Heart left ventricle (tissue), 16 donors: ENCODE measurements at regions of chr17 and their contacts with region 1.

Region 1: GRCh38 chr17:29124117-29124924 is 55.9 kb downstream of the MYO18A start:
- DNase-seq: peak in 1 of 5 donors; percentile 54
- ATAC-seq: peak; percentile 60 to 80 (median 74)
- H3K4me3 ChIP-seq: no peak overlapping the region
- H3K27ac ChIP-seq: peak overlapping the region in 7 of 12 donors; percentile 7 to 63 (median 38)
- H3K4me1 ChIP-seq: peaks cover 5 to 51% (median 36%) of the 10 kb centered on the region in 12 donors
- H3K27me3 ChIP-seq: no peaks in the 10 kb centered on the region
- CTCF ChIP-seq: peak; percentile 48 to 79 (median 68)
- POLR2A ChIP-seq: no peak

Region 2: GRCh38 chr17:28008542-28008941 is 1115.8 kb before region 1 on chr17:
- intact Hi-C with region 1: no loop called
- DNase-seq: peak in 4 of 5 donors; percentile 25 to 48 (median 38)
- ATAC-seq: peak in 3 of 4 donors; percentile 42 to 51 (median 50)
- H3K4me3 ChIP-seq: no peak overlapping the region
- H3K27ac ChIP-seq: no peak overlapping the region
- H3K4me1 ChIP-seq: no peaks in the 10 kb centered on the region
- H3K27me3 ChIP-seq: no peaks in the 10 kb centered on the region
- CTCF ChIP-seq: no peak
- POLR2A ChIP-seq: no peak

Region 3: GRCh38 chr17:29140051-29140621 is 15.8 kb after region 1 on chr17:
- intact Hi-C with region 1: loop called in 3 of 10 experiments (anchors 2 kb)
- DNase-seq: peak; percentile 91 to 94 (median 94)
- ATAC-seq: peak; percentile 86 to 93 (median 91)
- H3K4me3 ChIP-seq: peak overlapping the region; percentile 25 to 70 (median 58)
- H3K27ac ChIP-seq: peak overlapping the region; percentile 76 to 97 (median 92)
- H3K4me1 ChIP-seq: peaks cover 9 to 86% (median 63%) of the 10 kb centered on the region in 12 donors
- H3K27me3 ChIP-seq: no peaks in the 10 kb centered on the region
- CTCF ChIP-seq: no peak
- POLR2A ChIP-seq: peak; percentile 83 to 88

Region 4: GRCh38 chr17:29219378-29220047 is 95.2 kb after region 1 on chr17:
- intact Hi-C with region 1: loop called in 3 of 10 experiments (anchors 1 to 5 kb)
- DNase-seq: peak; percentile 69 to 79 (median 75)
- ATAC-seq: peak; percentile 67 to 90 (median 88)
- H3K4me3 ChIP-seq: no peak overlapping the region
- H3K27ac ChIP-seq: no peak overlapping the region
- H3K4me1 ChIP-seq: peaks cover 0 to 10% (median 5%) of the 10 kb centered on the region in 12 donors
- H3K27me3 ChIP-seq: no peaks in the 10 kb centered on the region
- CTCF ChIP-seq: peak; percentile 88 to 97 (median 94)
- POLR2A ChIP-seq: no peak

Region 5: GRCh38 chr17:29293890-29294579 is 169.7 kb after region 1 on chr17 and contains the start of gene NUFIP2:
- intact Hi-C with region 1: loop called in 2 of 10 experiments (anchors 5 kb)
- DNase-seq: peak; percentile 99 to 100 (median 100)
- ATAC-seq: peak; percentile 94 to 98 (median 98)
- H3K4me3 ChIP-seq: peak within 1 kb of the TSS; percentile 61 to 99 (median 90)
- H3K27ac ChIP-seq: peak within 1 kb of the TSS; percentile 92 to 100 (median 96)
- H3K4me1 ChIP-seq: peaks cover 5 to 38% (median 29%) of the 10 kb centered on the region in 12 donors
- H3K27me3 ChIP-seq: no peaks in the 10 kb centered on the region
- CTCF ChIP-seq: peak in 2 of 12 donors; percentile 19 to 30
- POLR2A ChIP-seq: peak; percentile 100
- total RNA-seq, gene NUFIP2: 24.2 to 51.5 (median 35.7) TPM